Endothelial cell of umbilical vein (primary cell): ENCODE measurements at regions of chr16 and their contacts with region 1.

Region 1: GRCh38 chr16:86834451-86835035 is 256.2 kb downstream of the FOXL1 start:
- DNase-seq: peak; percentile 41
- H3K4me3 ChIP-seq: no peak overlapping the region
- H3K27ac ChIP-seq: no peak overlapping the region
- H3K4me1 ChIP-seq: peaks cover 7% of the 10 kb centered on the region
- H3K27me3 ChIP-seq: no peaks in the 10 kb centered on the region
- CTCF ChIP-seq: peak in 1 of 2 donors; percentile 29
- POLR2A ChIP-seq: no peak

Region 2: GRCh38 chr16:86797700-86798099 is 36.8 kb before region 1 on chr16:
- CTCF ChIA-PET with region 1: interaction called, 4 read pairs
- POLR2A ChIA-PET with region 1: no interaction called
- dilution Hi-C with region 1: no loop called
- intact Hi-C with region 1: loop called (anchors 2 kb)
- DNase-seq: no peak
- H3K4me3 ChIP-seq: no peak overlapping the region
- H3K27ac ChIP-seq: no peak overlapping the region
- H3K4me1 ChIP-seq: peaks cover 12% of the 10 kb centered on the region
- H3K27me3 ChIP-seq: peaks cover 4 to 10% of the 10 kb centered on the region in 2 experiments
- CTCF ChIP-seq: no peak
- POLR2A ChIP-seq: no peak

Region 3: DNA sequence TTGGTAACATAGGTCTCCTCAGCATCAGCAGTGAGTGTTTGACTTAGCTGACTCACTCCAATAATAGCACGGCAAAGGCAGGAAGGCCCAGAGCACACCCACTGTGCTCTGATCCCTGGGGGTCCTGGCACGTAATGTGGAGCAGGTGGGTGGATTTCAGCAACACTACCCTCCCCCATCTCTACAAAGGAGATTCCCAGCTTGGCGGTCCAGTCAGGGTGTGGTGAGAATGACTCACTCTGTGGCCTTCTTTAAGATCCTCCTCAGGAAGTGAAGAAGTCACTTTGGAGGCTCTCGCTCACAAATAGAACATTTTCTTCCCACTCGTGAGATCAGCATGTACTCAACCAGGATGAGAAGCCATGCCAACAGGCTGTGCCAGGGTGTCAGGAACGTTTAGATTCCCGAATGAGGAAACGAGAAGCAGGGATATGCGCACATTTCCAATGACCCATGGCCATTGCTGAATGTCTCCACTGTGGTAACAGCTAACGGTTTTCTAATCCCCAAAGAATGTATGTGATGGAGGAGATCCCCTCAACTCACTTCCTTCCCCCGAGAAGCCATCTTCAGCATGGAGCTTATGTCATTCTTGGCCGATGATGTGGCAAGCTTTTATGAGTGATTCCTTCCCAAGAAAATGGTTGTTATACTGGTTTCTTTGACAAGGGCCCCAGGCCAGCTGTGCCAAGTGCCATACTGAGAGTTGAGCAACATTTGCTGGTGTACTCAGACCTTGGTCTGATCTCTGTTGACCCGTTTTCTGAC is 117.5 kb after region 1 on chr16:
- CTCF ChIA-PET with region 1: no interaction called
- POLR2A ChIA-PET with region 1: no interaction called
- dilution Hi-C with region 1: no loop called
- intact Hi-C with region 1: no loop called
- DNase-seq: peak; percentile 68
- H3K4me3 ChIP-seq: no peak overlapping the region
- H3K27ac ChIP-seq: peak overlapping the region; percentile 87
- H3K4me1 ChIP-seq: peaks cover 26% of the 10 kb centered on the region
- H3K27me3 ChIP-seq: no peaks in the 10 kb centered on the region
- CTCF ChIP-seq: no peak
- POLR2A ChIP-seq: no peak